CD14-positive monocyte (primary cell): ENCODE measurements at regions of chr3 and their contacts with region 1.

Region 1: GRCh38 chr3:28268989-28269388 is 27.6 kb downstream of the CMC1 start:
- DNase-seq: no peak
- H3K4me3 ChIP-seq: no peak overlapping the region
- H3K4me3 Mint-ChIP-seq: no peak overlapping the region
- H3K27ac ChIP-seq: no peak overlapping the region
- H3K27ac Mint-ChIP-seq: no peak overlapping the region
- H3K4me1 ChIP-seq: no peaks in the 10 kb centered on the region
- H3K4me1 Mint-ChIP-seq: peaks cover 2% of the 10 kb centered on the region
- H3K27me3 ChIP-seq: no peaks in the 10 kb centered on the region
- H3K27me3 Mint-ChIP-seq: peaks cover 0 to 4% (median 0%) of the 10 kb centered on the region in 3 donors
- CTCF ChIP-seq: no peak

Region 2: DNA sequence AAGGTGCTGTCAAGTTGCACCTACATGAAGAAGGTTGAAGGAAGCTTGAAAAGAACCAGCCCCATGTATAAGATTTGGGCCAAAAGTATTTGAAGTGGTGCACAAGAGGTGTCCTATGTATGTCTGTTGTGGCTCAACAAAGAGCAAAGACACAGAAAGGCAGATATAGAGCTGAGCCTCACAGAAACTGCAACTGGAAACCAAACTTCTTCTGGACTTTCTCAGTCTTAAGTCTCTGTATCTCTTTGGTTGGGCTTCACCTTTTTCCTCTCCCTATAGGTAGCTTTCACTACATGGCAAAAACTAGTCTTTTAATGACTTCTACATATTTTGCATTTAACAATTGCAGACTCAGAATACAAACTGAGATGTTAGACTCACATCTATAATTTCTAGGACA is 36.3 kb before region 1 on chr3:
- intact Hi-C with region 1: loop called in 1 of 2 experiments (anchors 5 kb)
- DNase-seq: no peak
- H3K4me3 ChIP-seq: no peak overlapping the region
- H3K4me3 Mint-ChIP-seq: no peak overlapping the region
- H3K27ac ChIP-seq: no peak overlapping the region
- H3K27ac Mint-ChIP-seq: peak overlapping the region in 1 of 7 donors; percentile 26
- H3K4me1 ChIP-seq: no peaks in the 10 kb centered on the region
- H3K4me1 Mint-ChIP-seq: no peaks in the 10 kb centered on the region
- H3K27me3 ChIP-seq: no peaks in the 10 kb centered on the region
- H3K27me3 Mint-ChIP-seq: peaks cover 0 to 7% (median 5%) of the 10 kb centered on the region in 3 donors
- CTCF ChIP-seq: no peak

Region 3: DNA sequence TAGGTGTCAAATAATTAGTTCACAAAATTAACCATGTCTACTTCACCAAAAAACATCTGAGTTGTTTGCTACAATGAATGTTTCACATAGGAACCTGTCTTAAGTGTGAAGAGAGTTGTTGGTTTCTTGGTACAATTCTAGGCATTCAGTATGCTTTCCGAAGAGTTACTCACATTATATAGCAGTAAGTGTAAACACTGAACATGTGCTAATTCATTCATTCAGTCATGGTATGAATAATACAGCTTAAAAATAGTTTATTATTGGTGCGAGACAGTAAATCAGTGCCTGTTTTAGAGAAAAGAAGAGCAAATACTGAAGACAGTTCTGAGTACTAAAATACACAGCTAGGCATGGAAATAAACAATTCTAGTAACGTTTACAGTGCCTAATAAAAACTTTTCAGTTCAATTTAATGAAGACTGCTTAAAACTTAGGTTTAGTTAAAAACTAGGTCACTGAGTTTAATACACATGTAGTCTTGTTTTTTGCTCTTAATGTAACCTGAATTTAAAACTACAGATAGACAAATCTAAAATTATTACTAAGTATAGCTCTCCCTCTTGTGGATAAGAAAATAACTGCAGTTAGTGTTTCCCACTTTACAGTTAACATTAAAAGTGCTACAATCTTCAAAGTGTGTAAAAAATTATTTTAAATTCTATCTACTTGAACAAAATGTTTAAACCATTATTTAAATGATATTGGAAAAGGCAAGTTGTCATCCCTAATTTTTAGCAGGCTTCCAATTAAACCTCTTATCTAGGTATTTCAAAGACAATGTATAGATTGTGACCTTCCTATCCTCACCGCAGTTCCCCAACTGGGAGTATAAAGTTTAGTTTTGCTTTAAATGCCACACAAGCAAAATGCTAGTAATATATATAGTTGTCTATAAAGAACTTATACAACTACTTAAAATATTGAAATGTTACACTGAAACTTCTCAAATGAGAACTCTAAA is 59.5 kb after region 1 on chr3:
- intact Hi-C with region 1: no loop called
- DNase-seq: peak in 2 of 3 donors; percentile 14 to 54
- H3K4me3 ChIP-seq: no peak overlapping the region
- H3K4me3 Mint-ChIP-seq: no peak overlapping the region
- H3K27ac ChIP-seq: no peak overlapping the region
- H3K27ac Mint-ChIP-seq: no peak overlapping the region
- H3K4me1 ChIP-seq: peaks cover 4 to 10% of the 10 kb centered on the region in 2 donors
- H3K4me1 Mint-ChIP-seq: peaks cover 6% of the 10 kb centered on the region
- H3K27me3 ChIP-seq: no peaks in the 10 kb centered on the region
- H3K27me3 Mint-ChIP-seq: no peaks in the 10 kb centered on the region
- CTCF ChIP-seq: peak; percentile 86